AG04449 (cell line): ENCODE measurements at regions of chr9 and their contacts with region 1.

Region 1: DNA sequence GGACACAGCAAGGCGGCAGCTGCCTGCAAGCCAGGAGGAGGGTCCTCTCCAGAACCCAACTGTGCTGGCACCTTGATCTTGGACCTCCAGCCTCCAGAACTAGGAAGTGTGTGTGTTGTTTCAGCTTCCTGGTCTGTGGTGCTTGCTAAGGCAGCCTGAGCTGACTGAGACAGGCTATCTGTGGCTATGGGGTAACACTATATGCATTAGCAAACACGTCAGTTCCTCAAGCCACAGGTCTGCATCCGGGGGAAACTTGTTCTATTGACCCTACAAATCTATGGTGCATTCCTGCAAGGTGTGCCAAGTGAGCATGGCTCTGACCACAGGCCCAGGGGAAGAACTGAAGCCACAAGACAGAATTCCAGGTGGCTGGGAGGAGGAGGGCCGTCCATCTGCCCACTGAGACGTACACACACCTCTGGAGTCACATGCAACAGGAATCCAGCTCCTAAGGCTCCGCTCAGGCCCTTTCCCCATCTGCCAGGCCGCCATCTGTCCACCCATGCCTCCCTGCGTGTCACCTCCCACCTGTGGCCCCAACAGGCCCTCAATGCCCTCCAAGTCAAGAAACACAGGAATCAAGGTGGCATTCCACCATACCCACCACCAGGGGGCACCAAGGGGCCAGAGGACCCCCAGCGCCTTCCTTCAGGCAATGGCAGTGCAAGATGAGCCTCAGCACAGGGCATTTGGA is 174.9 kb downstream of the ROR2 start:
- DNase-seq: no peak
- H3K4me3 ChIP-seq: no peak overlapping the region
- CTCF ChIP-seq: peak; percentile 92

Region 2: DNA sequence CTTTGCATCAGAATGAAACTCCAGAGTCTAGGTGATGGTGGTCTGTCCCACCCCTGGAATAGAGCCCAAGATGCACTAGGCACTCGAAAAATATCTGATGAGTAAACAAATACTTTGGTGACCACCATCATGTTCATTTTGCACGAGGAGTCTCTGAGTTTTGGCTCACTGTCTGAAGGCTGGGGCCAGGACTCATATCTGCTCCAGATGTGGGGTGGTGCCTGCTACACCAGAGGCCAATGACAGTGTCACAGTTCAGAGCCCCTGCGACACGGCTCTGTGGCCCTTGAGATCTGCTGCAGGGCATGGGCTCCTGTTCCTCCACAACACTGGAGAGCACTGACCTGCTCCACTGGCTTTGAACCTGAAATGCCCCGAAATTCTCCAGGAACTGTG is 10.3 kb after region 1 on chr9:
- CTCF ChIA-PET with region 1: interaction called, 14 read pairs
- POLR2A ChIA-PET with region 1: no interaction called
- DNase-seq: no peak
- H3K4me3 ChIP-seq: no peak overlapping the region
- CTCF ChIP-seq: no peak